ENCODE measurements at regions of chr22 and their contacts with region 1.

Region 1: DNA sequence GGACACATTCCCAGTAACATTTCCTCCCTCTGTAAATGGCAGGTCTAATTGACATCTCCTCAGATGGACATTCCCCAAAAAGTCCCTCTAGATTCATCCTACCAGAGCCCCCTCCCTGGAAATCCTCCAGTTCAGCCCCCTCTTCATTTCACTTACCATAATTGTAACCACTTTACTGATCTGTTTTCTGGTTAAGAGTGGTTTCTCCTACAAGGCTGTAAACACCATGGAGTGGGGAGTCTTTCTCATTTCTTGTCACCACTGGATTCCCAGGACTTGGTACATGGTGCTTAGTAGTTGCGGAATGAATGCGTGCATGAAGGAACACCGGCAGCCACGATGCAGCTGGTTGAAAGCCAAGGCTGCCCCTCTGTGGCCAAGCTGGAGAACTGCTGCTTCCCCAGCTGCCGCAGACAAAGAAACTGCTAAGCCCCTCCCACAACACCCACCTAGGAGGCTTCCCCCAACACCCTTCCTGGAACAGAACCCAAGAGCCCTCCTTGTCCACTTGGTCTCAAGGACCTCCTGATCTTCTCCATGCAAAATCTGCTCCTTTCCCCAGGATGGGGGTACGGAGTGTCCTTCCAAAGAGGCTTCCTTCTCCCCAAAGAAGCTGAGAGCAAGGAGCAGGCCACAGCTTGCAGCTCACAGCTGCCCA is 18.6 kb upstream of the SCARF2 start:
- DNase-seq: peak; percentile 88
- ATAC-seq: peak; percentile 95
- H3K4me3 Mint-ChIP-seq: no peak overlapping the region
- H3K27ac Mint-ChIP-seq: peak overlapping the region; percentile 59
- H3K4me1 Mint-ChIP-seq: peaks cover 20% of the 10 kb centered on the region
- H3K27me3 Mint-ChIP-seq: no peaks in the 10 kb centered on the region

Region 2: GRCh38 chr22:19986410-19987341 is 469.5 kb before region 1 on chr22:
- CTCF ChIA-PET with region 1: no interaction called
- POLR2A ChIA-PET with region 1: no interaction called
- intact Hi-C with region 1: loop called in 1 of 2 experiments (anchors 10 kb)
- DNase-seq: peak; percentile 84
- ATAC-seq: peak; percentile 88
- H3K4me3 Mint-ChIP-seq: no peak overlapping the region
- H3K27ac Mint-ChIP-seq: no peak overlapping the region
- H3K4me1 Mint-ChIP-seq: no peaks in the 10 kb centered on the region
- H3K27me3 Mint-ChIP-seq: no peaks in the 10 kb centered on the region

Region 3: GRCh38 chr22:20430720-20431510 is 25.3 kb before region 1 on chr22:
- CTCF ChIA-PET with region 1: interaction called, 8 read pairs
- POLR2A ChIA-PET with region 1: no interaction called
- intact Hi-C with region 1: loop called in 1 of 2 experiments (anchors 1 kb)
- DNase-seq: peak; percentile 79
- ATAC-seq: peak; percentile 57
- H3K4me3 Mint-ChIP-seq: peak overlapping the region; percentile 45
- H3K27ac Mint-ChIP-seq: no peak overlapping the region
- H3K4me1 Mint-ChIP-seq: peaks cover 12% of the 10 kb centered on the region
- H3K27me3 Mint-ChIP-seq: peaks cover 51% of the 10 kb centered on the region

Measured in activated CD4-positive, alpha-beta T cell treated with anti-CD3 and anti-CD28 coated beads for 36 hours (primary cell).